Endothelial cell of umbilical vein (primary cell): ENCODE measurements at regions of chr22 and their contacts with region 1.

Region 1: DNA sequence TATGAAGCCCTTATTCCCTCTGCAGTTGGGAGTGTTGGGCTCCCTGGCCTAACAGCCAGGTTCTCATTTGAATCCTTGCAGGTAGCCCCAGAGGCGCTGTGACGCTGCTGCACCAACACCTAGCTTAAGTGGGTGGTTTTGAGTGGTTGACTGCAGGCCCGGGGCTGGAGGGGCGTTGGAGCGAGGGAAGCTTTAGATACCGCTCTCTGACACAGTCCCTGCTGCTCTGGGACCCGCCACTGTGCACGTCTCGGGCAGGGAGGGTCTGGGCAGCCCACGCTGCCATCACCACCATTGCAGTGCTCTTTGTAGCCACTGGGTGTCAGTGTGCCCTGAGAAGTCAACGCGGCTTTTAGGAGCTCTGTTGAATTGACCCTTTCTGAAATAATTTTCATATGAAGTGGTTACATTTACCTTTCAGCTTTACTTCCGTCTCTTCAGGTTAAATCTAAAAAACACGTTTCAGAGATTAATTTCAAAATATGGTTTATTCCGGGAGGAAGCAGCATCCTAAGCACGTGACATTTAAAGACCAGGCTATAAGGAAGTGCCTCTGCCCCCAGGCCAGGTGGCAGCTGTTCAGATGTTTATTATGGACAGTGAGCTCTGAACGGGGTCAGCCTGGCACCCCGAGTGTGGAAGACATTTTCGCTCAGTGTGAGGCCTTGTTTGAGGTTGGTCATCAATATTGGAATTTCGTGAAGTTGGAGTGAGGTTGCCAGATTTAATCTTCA is 30.9 kb upstream of the PARVB start:
- DNase-seq: peak; percentile 53
- H3K4me3 ChIP-seq: no peak overlapping the region
- H3K27ac ChIP-seq: no peak overlapping the region
- H3K4me1 ChIP-seq: peaks cover 6% of the 10 kb centered on the region
- H3K27me3 ChIP-seq: no peaks in the 10 kb centered on the region
- CTCF ChIP-seq: peak; percentile 90 to 94
- POLR2A ChIP-seq: no peak

Region 2: DNA sequence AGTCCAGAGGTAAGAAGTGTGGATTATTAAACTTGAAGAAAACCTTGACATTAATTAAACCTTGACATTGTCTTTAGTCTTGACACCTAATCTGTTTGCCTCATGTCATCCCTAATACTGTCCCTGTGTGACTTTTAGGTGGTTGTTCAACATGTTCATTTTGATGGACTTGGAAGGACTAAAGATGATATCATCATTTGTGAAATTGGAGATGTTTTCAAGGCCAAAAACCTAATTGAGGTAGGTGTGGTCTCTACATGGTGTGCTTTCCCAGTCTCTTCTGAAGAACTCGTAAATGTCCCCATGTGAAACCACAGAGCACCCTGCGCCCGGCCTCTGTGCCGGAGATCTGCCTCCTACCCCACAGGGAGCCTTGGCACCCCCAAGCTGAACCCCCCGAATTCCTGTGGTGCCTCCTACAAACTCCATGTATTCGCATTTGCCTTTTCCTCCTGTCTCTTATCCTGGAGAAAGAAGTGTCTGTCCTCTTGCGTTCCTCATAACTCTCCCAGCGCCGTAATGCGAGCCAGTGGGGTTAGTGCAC is 28.8 kb before region 1 on chr22:
- CTCF ChIA-PET with region 1: no interaction called
- POLR2A ChIA-PET with region 1: no interaction called
- dilution Hi-C with region 1: no loop called
- intact Hi-C with region 1: no loop called
- DNase-seq: no peak
- H3K4me3 ChIP-seq: no peak overlapping the region
- H3K27ac ChIP-seq: no peak overlapping the region
- H3K4me1 ChIP-seq: no peaks in the 10 kb centered on the region
- H3K27me3 ChIP-seq: no peaks in the 10 kb centered on the region
- CTCF ChIP-seq: no peak
- POLR2A ChIP-seq: no peak

Region 3: GRCh38 chr22:44003405-44004103 is 10.4 kb after region 1 on chr22:
- CTCF ChIA-PET with region 1: interaction called, 44 read pairs
- POLR2A ChIA-PET with region 1: no interaction called
- dilution Hi-C with region 1: no loop called
- intact Hi-C with region 1: no loop called
- DNase-seq: peak; percentile 60
- H3K4me3 ChIP-seq: no peak overlapping the region
- H3K27ac ChIP-seq: no peak overlapping the region
- H3K4me1 ChIP-seq: peaks cover 14% of the 10 kb centered on the region
- H3K27me3 ChIP-seq: no peaks in the 10 kb centered on the region
- CTCF ChIP-seq: peak; percentile 37 to 64
- POLR2A ChIP-seq: no peak

Region 4: DNA sequence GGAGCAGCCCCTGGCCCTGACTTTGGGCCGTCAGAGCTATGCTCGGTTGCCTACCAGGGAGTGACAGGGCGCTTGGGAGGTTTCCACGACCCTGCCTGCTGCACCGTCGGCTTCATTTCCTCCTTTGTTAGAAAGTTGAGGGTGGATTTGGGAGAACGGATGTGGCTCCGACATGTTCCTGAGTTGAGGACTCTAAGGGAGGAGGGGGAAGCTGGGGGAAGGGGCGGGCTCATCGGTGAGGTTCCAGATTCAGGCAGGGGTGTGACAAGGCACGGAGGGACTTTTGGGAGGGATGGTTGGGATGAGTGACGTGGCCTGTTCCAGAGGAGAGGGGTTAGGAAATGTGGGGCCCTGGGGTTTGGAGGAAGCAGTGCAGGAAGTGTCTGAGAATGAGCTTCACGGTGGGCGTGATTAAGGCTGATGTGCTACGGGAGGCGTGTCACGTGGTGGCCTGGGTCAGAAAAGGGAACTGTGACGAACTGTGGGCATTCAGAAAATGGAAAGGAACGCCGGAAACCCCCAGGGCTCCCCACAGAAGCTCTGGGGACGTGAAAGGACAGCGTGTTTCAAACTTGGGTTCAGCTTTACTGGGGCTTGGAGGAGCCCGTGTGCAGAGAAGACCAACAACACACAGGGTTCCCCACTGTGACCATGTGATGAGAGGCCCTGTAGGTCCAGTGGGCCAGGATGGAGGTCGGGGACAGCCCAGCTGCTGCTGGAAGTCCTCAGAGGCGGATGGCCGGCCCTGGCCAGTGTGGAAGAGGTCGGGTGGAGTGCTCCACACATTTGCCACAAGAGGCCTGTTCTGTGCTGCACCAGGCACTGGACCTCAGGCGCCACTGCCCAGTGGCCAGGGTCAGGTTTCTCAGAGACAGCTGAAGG is 33.7 kb after region 1 on chr22:
- CTCF ChIA-PET with region 1: interaction called, 21 read pairs
- POLR2A ChIA-PET with region 1: no interaction called
- dilution Hi-C with region 1: no loop called
- intact Hi-C with region 1: no loop called
- DNase-seq: peak; percentile 88
- H3K4me3 ChIP-seq: peak overlapping the region in 2 of 3 experiments; percentile 18 to 52
- H3K27ac ChIP-seq: peak overlapping the region; percentile 99
- H3K4me1 ChIP-seq: peaks cover 66% of the 10 kb centered on the region
- H3K27me3 ChIP-seq: no peaks in the 10 kb centered on the region
- CTCF ChIP-seq: no peak
- POLR2A ChIP-seq: peak; percentile 70

Region 5: DNA sequence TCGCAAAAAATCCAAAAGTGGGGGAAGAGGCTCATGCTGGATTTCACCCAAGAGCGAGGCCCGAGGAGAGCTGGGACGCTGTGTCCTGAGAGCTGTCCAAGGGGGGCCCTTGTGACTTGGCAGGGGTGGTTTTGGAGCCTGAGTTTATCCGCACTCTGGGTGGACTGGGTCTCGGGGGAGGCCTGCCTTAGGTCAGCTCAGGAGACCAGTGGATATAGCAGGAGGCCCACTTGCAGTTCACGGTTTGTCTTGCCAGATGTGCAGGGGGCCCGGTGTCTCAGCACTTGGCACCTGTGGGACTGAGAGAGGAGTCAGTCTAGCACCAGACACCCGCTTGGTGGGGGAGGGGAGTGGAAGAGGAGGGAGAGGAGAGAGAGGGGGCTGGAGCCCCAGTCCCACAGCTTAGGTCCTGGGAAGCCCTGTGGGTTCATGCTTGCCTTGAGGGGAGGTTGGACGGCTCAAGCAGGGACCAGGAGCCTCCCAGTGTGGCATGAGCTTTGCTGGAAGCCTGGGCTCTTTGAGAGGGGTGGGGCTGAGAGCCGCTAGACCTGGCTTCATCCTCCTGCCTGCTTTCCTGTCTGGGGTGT is 64.3 kb after region 1 on chr22:
- CTCF ChIA-PET with region 1: interaction called, 10 read pairs
- POLR2A ChIA-PET with region 1: no interaction called
- dilution Hi-C with region 1: no loop called
- intact Hi-C with region 1: no loop called
- DNase-seq: no peak
- H3K4me3 ChIP-seq: no peak overlapping the region
- H3K27ac ChIP-seq: no peak overlapping the region
- H3K4me1 ChIP-seq: peaks cover 11% of the 10 kb centered on the region
- H3K27me3 ChIP-seq: no peaks in the 10 kb centered on the region
- CTCF ChIP-seq: no peak
- POLR2A ChIP-seq: no peak

Region 6: DNA sequence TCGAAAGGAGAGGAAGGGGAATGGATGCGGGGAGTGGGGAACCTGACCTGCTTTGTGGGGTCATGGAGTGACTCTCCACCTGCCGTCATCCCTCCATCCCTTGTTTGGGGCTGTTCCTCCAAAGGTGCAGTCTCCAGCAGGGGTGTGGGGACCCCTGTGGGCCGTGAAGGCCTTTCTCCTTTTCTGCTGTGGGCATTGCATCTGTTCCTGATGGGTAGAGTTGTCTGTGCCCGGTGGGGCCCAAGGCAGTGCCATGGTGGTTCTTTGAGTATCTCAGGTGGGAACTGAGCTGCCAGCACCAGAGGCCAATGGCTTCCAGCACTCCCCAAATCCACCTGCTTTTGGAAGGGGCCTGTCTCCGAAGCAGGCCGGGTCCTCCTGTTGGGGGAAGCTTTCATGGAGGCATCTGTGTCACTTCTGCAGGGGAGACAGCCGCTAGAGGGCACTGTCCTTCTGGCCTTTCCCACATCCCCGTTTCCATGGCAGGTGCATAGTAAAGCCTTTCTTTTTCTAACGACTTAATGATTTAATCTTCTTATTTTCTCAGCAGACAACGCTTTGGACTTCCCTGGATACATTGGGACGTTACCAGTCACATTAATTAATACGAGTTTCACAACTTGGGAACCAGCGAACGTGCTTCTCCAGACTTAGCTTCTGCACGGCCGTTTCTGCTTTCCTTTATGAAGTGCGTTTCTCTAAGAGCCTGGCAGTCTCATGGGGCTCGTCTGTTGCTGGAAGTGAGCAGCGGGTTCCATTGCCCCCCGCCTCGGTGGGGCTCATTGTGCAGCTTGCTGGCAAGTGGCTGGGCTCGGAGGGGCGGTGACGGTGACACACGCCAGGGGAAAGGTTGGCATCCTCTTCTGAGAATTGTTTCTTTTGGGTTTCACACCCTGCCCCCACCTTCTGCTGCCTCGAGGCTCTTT is 88.0 kb after region 1 on chr22:
- CTCF ChIA-PET with region 1: interaction called, 640 read pairs
- POLR2A ChIA-PET with region 1: interaction called, 6 read pairs
- dilution Hi-C with region 1: no loop called
- intact Hi-C with region 1: loop called (anchors 1 kb)
- DNase-seq: peak; percentile 51
- H3K4me3 ChIP-seq: no peak overlapping the region
- H3K27ac ChIP-seq: no peak overlapping the region
- H3K4me1 ChIP-seq: no peaks in the 10 kb centered on the region
- H3K27me3 ChIP-seq: no peaks in the 10 kb centered on the region
- CTCF ChIP-seq: peak; percentile 84 to 90
- POLR2A ChIP-seq: no peak

Region 7: GRCh38 chr22:44127356-44127755 is 134.2 kb after region 1 on chr22:
- CTCF ChIA-PET with region 1: interaction called, 10 read pairs
- POLR2A ChIA-PET with region 1: no interaction called
- dilution Hi-C with region 1: no loop called
- intact Hi-C with region 1: no loop called
- DNase-seq: peak; percentile 48
- H3K4me3 ChIP-seq: no peak overlapping the region
- H3K27ac ChIP-seq: no peak overlapping the region
- H3K4me1 ChIP-seq: peaks cover 24% of the 10 kb centered on the region
- H3K27me3 ChIP-seq: no peaks in the 10 kb centered on the region
- CTCF ChIP-seq: no peak
- POLR2A ChIP-seq: no peak

Region 8: GRCh38 chr22:44567846-44568493 is 574.8 kb after region 1 on chr22:
- CTCF ChIA-PET with region 1: interaction called, 22 read pairs
- POLR2A ChIA-PET with region 1: no interaction called
- dilution Hi-C with region 1: no loop called
- intact Hi-C with region 1: loop called (anchors 5 kb)
- DNase-seq: peak; percentile 27
- H3K4me3 ChIP-seq: no peak overlapping the region
- H3K27ac ChIP-seq: no peak overlapping the region
- H3K4me1 ChIP-seq: no peaks in the 10 kb centered on the region
- H3K27me3 ChIP-seq: peaks cover 0 to 2% of the 10 kb centered on the region in 2 experiments
- CTCF ChIP-seq: peak; percentile 35 to 65
- POLR2A ChIP-seq: no peak